AG04449 (cell line): ENCODE measurements at regions of chr17 and their contacts with region 1.

Region 1: DNA sequence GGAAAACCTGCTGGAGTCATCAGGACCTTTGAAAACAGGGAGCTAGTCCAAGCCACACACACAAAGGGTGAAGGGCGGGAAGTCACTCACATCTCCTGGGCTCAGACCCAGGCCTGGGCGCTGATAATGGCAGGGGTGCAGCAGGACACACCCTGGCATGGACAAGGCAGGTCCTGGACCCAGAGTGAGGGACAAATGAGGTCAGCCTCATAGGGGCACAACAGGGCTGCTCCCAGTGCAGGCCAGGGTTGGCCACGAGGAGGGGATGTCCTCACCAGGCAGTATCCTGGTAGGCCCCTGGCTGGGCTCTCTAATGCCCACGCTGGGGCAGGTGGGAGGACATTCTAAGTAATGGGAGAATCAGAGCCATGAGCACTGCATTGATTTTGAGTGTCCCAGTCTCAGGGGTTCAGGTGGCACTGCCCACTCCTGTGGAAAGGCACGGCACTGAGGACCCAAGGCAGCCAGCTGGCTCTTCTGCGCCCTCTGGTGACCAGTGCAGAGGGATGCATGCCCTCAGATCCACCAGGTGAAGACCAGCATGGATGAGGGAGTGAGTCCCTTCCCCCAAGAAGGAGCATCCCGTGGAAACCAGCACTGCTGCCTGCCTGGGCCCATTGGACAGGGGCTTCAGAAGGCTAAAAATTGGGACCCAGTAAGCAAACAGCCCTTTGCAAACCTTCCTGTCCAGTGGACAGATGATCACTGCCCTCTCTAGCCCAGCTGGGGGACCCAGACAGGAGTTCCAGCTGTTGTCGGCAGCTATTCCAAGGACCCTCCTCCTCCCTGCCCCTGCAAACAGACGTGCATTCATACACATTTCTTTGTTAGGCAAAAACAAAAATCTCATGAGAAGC is 23.4 kb upstream of the SREBF1 start:
- DNase-seq: no peak
- H3K4me3 ChIP-seq: no peak overlapping the region
- CTCF ChIP-seq: peak; percentile 97

Region 2: DNA sequence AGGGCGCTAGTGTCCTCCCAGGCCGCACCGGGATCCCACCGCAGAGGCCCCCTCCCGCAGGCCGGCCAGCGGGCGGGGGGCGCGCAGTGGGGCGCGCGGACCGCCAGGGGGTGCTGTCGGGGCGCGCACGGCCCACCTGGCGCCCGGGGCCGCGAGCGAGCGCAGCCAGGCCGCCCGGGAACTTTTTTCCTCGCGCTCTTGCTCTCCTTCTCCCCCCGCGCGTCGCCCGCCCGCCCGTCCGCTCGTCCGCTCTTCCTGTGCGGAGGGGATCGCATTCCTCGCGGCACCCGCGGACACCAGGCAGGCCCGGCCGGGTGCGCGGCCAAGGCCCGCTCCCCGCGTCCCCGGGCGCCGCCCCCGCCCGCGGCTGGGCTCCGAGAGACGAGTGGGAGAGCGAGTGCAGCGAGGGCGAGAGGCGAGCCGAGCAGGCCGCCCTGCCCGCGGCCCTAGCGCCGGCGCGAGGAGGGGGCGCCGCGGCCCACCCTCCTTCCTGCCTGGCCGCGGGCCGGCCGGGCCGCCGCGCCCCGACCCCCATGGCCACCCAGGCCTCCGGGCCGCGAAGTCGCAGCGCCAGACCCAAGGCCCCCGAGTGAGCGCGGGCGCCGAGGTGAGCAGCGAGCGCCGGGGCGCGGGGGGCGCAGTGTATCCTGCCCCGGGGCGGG is 178.8 kb before region 1 on chr17 and contains the start of gene RAI1:
- CTCF ChIA-PET with region 1: interaction called, 51 read pairs
- POLR2A ChIA-PET with region 1: interaction called, 3 read pairs
- DNase-seq: no peak
- H3K4me3 ChIP-seq: peak within 1 kb of the TSS; percentile 76
- CTCF ChIP-seq: peak; percentile 50

Region 3: GRCh38 chr17:17729620-17730249 is 130.4 kb before region 1 on chr17:
- CTCF ChIA-PET with region 1: no interaction called
- POLR2A ChIA-PET with region 1: no interaction called
- DNase-seq: no peak
- H3K4me3 ChIP-seq: no peak overlapping the region
- CTCF ChIP-seq: peak; percentile 46

Region 4: GRCh38 chr17:17849845-17850373 is 10.2 kb before region 1 on chr17:
- CTCF ChIA-PET with region 1: interaction called, 82 read pairs
- POLR2A ChIA-PET with region 1: no interaction called
- DNase-seq: no peak
- H3K4me3 ChIP-seq: no peak overlapping the region
- CTCF ChIP-seq: peak; percentile 30

Region 5: DNA sequence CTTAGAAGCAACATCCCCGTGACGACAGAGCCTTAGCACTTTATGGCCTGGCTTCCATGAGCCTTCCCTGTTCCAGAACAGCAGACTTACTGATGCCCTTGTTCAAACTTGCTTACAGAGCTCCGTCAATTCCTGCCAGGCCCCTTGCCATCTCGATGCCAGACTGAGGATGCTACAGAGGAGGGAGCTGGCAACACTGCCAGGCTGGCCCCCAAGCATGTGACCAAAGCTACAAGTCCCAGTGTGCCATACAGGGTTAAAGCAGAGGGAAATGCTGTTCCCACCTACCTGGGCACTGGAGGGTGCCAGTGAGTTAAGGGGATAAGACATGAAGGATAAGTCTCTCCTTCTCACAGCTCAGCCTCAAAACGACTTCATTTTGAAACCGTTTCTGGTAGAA is 10.1 kb after region 1 on chr17:
- CTCF ChIA-PET with region 1: interaction called, 13 read pairs
- POLR2A ChIA-PET with region 1: no interaction called
- DNase-seq: no peak
- H3K4me3 ChIP-seq: no peak overlapping the region
- CTCF ChIP-seq: no peak

Region 6: DNA sequence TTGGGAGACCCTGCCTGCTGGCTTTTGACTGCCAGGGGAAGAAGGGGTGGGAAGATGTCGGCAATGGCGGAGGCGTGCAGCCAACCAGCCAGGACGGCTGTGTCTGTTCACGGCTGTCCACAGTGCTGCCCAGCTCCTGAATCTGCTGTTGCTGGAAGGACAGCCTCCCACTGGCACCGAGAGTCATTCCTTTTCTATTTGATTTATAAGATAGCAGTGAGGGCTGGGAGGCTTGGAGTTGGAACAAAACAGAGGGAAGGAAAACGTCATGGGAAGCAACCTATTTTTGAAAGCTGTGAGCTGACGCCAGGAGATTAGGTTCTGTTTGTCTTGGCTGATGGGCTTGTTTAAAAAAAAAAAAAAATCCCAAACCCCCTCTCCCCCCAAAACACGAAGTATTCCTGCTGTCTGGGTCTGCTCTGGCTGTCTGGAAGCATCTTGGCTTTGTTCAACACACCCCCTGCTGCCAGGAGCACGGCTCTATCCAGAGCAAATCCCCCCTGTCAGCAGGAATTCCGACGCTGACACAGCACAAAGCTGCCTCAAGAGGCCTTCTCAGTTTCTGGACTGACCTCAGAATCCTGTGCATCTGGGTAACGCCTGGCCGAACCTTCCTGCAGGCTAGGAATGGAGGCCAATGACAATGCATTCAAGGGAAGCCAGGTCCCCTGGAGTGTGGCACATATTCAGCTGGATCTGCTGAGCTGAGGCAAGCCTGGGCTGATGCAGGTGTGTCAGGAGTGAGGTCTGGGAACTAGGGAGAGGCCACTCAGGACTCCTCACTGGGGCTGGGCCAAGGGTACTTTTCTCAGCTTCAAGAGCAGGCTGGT is 17.6 kb after region 1 on chr17:
- CTCF ChIA-PET with region 1: interaction called, 12 read pairs
- POLR2A ChIA-PET with region 1: no interaction called
- DNase-seq: peak; percentile 71
- H3K4me3 ChIP-seq: peak overlapping the region; percentile 13; the same call in 1 of the 2 replicates
- CTCF ChIP-seq: no peak

Region 7: GRCh38 chr17:17935321-17936271 is 75.5 kb after region 1 on chr17:
- CTCF ChIA-PET with region 1: no interaction called
- POLR2A ChIA-PET with region 1: no interaction called
- DNase-seq: peak; percentile 90
- H3K4me3 ChIP-seq: no peak overlapping the region
- CTCF ChIP-seq: no peak

Region 8: GRCh38 chr17:18025945-18026776 is 166.0 kb after region 1 on chr17:
- CTCF ChIA-PET with region 1: interaction called, 10 read pairs
- POLR2A ChIA-PET with region 1: no interaction called
- DNase-seq: peak; percentile 49
- H3K4me3 ChIP-seq: no peak overlapping the region
- CTCF ChIP-seq: peak; percentile 8